ENCODE measurements at regions of chr14 and their contacts with region 1.

Region 1: GRCh38 chr14:99982537-99983250 is 82.5 kb upstream of the EVL start:
- DNase-seq: peak; percentile 34
- ATAC-seq: peak; percentile 96
- H3K4me3 ChIP-seq: no peak overlapping the region
- H3K27ac ChIP-seq: no peak overlapping the region
- H3K4me1 ChIP-seq: no peaks in the 10 kb centered on the region
- H3K27me3 ChIP-seq: no peaks in the 10 kb centered on the region
- CTCF ChIP-seq: peak; percentile 79 to 92 (median 87)
- POLR2A ChIP-seq: no peak
- RAD21 ChIP-seq: peak; percentile 87

Region 2: DNA sequence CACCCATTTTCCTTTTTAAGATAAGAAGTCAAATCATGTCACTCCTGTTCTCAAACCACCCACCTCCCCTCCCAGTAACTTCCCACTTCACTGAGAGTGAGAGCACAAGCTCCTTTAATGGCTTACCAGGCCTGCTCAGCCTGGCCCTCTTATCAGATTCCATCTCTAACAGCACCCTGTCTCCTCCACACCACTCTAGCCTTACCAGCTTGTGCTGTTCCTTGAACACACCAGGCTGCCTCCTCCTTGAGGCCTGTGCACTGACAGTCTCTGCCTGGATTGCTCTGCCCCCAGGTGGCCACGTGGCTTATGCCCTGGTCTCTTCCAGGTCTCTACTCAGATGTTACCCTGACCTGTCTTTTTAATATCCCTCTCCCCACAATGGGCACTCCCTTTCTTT is 42.4 kb after region 1 on chr14:
- CTCF ChIA-PET with region 1: interaction called, 3 read pairs
- POLR2A ChIA-PET with region 1: no interaction called
- RAD21 ChIA-PET with region 1: no interaction called
- intact Hi-C with region 1: loop called (anchors 2 kb)
- DNase-seq: peak; percentile 35
- ATAC-seq: peak; percentile 98
- H3K4me3 ChIP-seq: no peak overlapping the region
- H3K27ac ChIP-seq: no peak overlapping the region
- H3K4me1 ChIP-seq: peaks cover 2 to 10% of the 10 kb centered on the region in 2 experiments; a peak in 2 of 4 replicates
- H3K27me3 ChIP-seq: no peaks in the 10 kb centered on the region
- CTCF ChIP-seq: peak; percentile 51 to 64 (median 59); a peak in 5 of 6 replicates
- POLR2A ChIP-seq: no peak
- RAD21 ChIP-seq: peak; percentile 68